Activated B cell treated with CpG ODN at 0.5 μM for 24 hours (primary cell): ENCODE measurements at regions of chr10 and their contacts with region 1.

Region 1: DNA sequence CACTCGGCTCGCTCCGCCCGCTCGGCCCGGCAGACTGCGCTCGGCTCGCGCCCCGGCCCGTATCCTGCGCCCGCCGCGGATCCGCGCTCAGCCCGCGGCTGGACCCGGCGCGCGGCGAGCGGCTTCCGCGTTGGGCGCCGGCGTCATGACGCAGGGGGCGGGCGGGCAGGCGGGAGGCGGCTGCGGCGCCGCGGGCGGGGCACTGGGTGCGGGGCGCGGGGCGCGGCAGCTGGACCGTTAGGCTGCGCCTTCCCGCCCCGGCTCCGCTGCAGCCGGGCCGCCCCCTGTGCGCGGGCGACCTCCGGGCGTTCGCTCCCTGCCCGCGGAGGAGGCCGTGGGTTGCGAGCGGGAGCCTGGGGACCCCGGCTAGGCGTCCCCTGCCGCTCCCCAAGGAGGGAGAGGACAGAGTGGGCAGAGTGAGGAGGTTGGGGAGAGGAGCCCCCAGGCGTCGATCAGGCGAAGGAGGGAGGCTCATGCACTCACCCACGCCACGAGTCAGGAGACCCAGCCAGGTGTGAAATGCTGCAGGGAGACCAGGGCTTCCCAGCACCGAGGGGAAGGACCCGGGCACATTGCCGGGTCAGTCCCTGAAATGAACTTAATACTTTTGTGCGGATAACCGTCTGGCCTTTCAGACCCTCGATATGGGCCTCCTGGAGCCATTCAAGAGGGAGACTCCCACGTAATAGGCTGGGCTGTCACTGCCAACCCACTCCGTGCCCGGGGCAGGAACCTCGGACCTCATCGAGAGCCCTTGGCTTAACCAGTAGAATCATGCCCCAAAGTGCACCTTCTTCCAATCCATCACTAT is at the start of gene PIP4K2A:
- DNase-seq: peak; percentile 83
- ATAC-seq: peak; percentile 85
- H3K4me3 Mint-ChIP-seq: peak within 1 kb of the TSS; percentile 90
- H3K27ac Mint-ChIP-seq: peak within 1 kb of the TSS; percentile 82
- H3K4me1 Mint-ChIP-seq: peaks cover 37% of the 10 kb centered on the region
- H3K27me3 Mint-ChIP-seq: no peaks in the 10 kb centered on the region
- CTCF ChIP-seq: no peak
- total RNA-seq, gene PIP4K2A: 94.6 and 102 TPM in 2 replicates

Region 2: GRCh38 chr10:22003079-22003913 is 711.4 kb before region 1 on chr10 and contains the start of gene DNAJC1:
- CTCF ChIA-PET with region 1: no interaction called
- POLR2A ChIA-PET with region 1: no interaction called
- intact Hi-C with region 1: loop called (anchors 5 kb)
- DNase-seq: peak; percentile 98
- ATAC-seq: peak; percentile 92
- H3K4me3 Mint-ChIP-seq: peak within 1 kb of the TSS; percentile 87
- H3K27ac Mint-ChIP-seq: peak within 1 kb of the TSS; percentile 91
- H3K4me1 Mint-ChIP-seq: peaks cover 41% of the 10 kb centered on the region
- H3K27me3 Mint-ChIP-seq: no peaks in the 10 kb centered on the region
- CTCF ChIP-seq: no peak
- total RNA-seq, gene DNAJC1: 9.2 and 10.9 TPM in 2 replicates

Region 3: GRCh38 chr10:22158426-22158825 is 556.3 kb before region 1 on chr10:
- CTCF ChIA-PET with region 1: no interaction called
- POLR2A ChIA-PET with region 1: no interaction called
- intact Hi-C with region 1: no loop called
- DNase-seq: no peak
- ATAC-seq: no peak
- H3K4me3 Mint-ChIP-seq: no peak overlapping the region
- H3K27ac Mint-ChIP-seq: no peak overlapping the region
- H3K4me1 Mint-ChIP-seq: peaks cover 8% of the 10 kb centered on the region
- H3K27me3 Mint-ChIP-seq: peaks cover under 1% of the 10 kb centered on the region
- CTCF ChIP-seq: no peak

Region 4: DNA sequence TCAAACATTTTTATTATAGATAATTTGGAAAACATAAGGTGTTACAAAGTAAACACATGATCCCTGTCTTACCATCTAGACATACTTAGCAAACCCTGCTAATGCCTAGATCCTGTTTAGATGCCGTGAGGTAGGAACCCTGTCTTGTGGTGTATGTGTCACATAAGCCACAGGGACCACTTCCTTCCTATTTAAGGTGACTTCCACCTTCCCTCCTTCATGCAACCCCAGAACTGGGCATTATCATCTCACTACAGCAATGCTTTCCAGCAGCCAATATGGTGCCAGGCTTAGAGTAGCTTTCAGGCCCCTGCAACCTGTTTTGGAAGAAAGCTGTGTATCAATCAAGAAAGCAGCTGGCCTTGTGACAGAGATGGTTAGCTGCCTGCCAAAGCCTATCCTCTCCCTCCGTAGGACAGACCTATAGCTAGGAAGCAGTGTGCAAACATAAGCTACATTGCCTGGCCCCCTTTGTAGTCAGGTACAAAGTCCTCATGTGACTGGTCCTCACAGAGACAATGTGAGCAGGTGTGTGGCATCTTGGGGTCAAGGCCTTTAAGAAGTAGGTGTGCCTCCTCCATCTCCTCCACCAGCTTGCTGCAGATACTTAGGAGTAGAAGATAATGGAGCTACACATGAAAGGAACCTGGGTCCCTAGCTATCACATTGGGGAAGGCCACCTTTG is 222.6 kb before region 1 on chr10:
- CTCF ChIA-PET with region 1: no interaction called
- POLR2A ChIA-PET with region 1: no interaction called
- intact Hi-C with region 1: no loop called
- DNase-seq: no peak
- ATAC-seq: no peak
- H3K4me3 Mint-ChIP-seq: no peak overlapping the region
- H3K27ac Mint-ChIP-seq: no peak overlapping the region
- H3K4me1 Mint-ChIP-seq: peaks cover 25% of the 10 kb centered on the region
- H3K27me3 Mint-ChIP-seq: peaks cover 4% of the 10 kb centered on the region
- CTCF ChIP-seq: no peak

Region 5: GRCh38 chr10:22597138-22597537 is 117.5 kb before region 1 on chr10:
- CTCF ChIA-PET with region 1: no interaction called
- POLR2A ChIA-PET with region 1: interaction called, 9 read pairs
- intact Hi-C with region 1: loop called (anchors 1 kb)
- DNase-seq: no peak
- ATAC-seq: peak; percentile 43
- H3K4me3 Mint-ChIP-seq: peak overlapping the region; percentile 48
- H3K27ac Mint-ChIP-seq: peak overlapping the region; percentile 83
- H3K4me1 Mint-ChIP-seq: peaks cover 96% of the 10 kb centered on the region
- H3K27me3 Mint-ChIP-seq: no peaks in the 10 kb centered on the region
- CTCF ChIP-seq: no peak

Region 6: DNA sequence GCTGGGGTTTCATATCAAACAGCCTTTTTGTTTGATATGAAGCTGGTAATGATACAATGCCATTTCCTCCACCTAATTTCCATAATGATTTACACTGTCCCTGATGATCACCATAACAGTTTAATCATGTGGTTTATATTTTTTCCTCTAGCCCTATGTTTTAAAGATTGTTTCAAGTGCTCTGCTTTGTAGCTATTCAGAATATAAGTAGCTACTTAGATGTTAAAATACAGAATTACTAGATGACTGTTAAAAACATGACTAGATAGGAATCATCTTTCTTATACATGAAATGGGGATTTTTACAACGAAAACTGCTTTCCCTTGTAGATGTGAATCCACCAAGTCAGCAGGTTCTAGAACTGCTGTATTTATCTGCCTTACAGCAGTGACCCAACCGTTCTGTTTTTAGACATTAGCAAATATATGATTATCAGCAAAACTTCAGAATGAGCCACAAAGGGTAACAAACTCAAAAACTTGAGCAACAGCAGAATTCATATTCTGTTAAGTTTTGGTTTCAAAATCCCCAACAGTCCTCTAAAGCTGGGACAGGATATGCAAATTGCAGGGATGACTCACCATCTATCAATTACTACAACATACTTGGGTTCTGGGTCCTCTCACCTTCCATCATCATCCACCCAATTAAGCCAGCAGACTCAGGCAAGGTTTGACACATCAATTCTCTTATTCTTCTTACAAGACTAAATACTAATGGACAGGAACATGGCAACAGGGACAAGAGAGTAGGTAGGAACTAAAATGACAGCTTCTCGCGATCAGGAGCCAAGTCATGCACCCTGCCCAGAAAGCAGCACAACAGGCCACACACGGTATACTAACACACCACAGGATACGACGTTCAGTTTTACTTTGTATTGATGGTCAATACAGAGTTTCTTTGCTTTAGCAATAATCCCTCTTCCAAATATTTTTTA is 84.2 kb before region 1 on chr10:
- CTCF ChIA-PET with region 1: no interaction called
- POLR2A ChIA-PET with region 1: interaction called, 19 read pairs
- intact Hi-C with region 1: no loop called
- DNase-seq: no peak
- ATAC-seq: peak; percentile 85
- H3K4me3 Mint-ChIP-seq: peak overlapping the region; percentile 75
- H3K27ac Mint-ChIP-seq: peak overlapping the region; percentile 95
- H3K4me1 Mint-ChIP-seq: peaks cover 96% of the 10 kb centered on the region
- H3K27me3 Mint-ChIP-seq: no peaks in the 10 kb centered on the region
- CTCF ChIP-seq: no peak

Region 7: DNA sequence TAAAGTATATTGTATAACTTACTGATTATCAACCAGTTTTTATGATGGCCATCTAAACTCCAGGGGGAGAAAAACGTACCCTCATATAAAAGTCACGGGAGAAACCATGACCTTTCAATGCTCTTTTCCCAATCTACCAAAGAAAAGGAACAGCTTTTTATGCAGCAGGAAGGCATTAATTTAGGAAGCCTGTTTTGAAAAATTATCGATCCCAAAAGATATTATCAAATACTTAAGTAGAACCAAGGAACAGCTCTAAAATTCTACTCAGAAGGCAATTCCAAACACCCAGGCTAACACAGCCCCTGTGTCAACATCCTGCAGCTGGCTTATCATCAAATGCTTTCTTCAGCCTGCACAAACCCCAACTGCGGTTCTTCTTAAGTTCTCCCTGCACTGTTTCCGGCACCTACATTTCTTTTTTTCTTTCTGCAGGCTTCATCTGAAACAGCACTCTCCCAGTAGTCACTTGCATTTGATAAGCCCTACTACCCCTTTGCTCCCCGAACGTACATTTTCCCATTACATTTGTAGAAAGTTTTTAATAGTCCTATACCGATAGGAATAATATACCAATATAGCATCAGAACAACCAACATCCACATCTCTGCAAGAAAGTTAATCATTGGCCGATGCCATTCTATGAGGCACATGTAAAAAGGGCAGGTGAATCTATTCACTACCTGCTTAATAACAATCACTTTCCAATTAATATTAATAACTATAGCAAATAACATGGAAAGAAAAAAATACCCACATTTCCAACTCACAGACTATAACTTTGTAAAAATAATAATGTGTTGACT is 48.2 kb before region 1 on chr10:
- CTCF ChIA-PET with region 1: interaction called, 3 read pairs
- POLR2A ChIA-PET with region 1: interaction called, 10 read pairs
- intact Hi-C with region 1: no loop called
- DNase-seq: no peak
- ATAC-seq: peak; percentile 68
- H3K4me3 Mint-ChIP-seq: peak overlapping the region; percentile 59
- H3K27ac Mint-ChIP-seq: peak overlapping the region; percentile 64
- H3K4me1 Mint-ChIP-seq: peaks cover 70% of the 10 kb centered on the region
- H3K27me3 Mint-ChIP-seq: no peaks in the 10 kb centered on the region
- CTCF ChIP-seq: no peak

Region 8: DNA sequence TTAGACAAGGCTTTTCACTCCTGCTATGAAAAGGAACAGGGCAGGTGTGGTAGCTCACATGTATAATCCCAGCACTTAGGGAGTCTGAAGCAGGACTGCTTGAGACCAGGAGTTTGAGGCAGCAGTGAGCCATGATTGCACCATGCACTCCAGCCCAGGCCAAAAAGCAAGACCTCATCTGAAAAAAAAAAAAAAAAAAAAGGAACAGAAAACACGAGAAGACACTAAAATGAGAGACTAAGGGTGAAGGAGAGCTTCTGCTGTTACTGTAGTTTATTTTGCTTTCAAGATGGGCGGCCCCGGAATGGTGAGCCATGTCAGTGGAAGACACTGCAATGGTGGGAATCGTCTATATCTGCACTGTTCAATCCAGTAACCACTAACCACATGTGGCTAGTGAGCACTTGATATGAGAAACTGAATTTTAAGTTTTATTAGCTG is 10.2 kb before region 1 on chr10:
- CTCF ChIA-PET with region 1: no interaction called
- POLR2A ChIA-PET with region 1: interaction called, 19 read pairs
- intact Hi-C with region 1: loop called (anchors 1 kb)
- DNase-seq: no peak
- ATAC-seq: peak; percentile 74
- H3K4me3 Mint-ChIP-seq: peak overlapping the region; percentile 49
- H3K27ac Mint-ChIP-seq: peak overlapping the region; percentile 79
- H3K4me1 Mint-ChIP-seq: peaks cover 92% of the 10 kb centered on the region
- H3K27me3 Mint-ChIP-seq: no peaks in the 10 kb centered on the region
- CTCF ChIP-seq: no peak